GM12878 (cell line): ENCODE measurements at regions of chr3 and their contacts with region 1.

Region 1: GRCh38 chr3:179015551-179016020 is 56.0 kb downstream of the ZMAT3 start:
- DNase-seq: peak; percentile 93
- ATAC-seq: peak; percentile 75
- H3K4me3 ChIP-seq: no peak overlapping the region
- H3K27ac ChIP-seq: peak overlapping the region; percentile 68
- H3K4me1 ChIP-seq: peaks cover 42% of the 10 kb centered on the region
- H3K27me3 ChIP-seq: no peaks in the 10 kb centered on the region
- CTCF ChIP-seq: peak; percentile 66 to 88 (median 83)
- EP300 ChIP-seq: no peak
- POLR2A ChIP-seq: no peak
- RAD21 ChIP-seq: peak; percentile 92

Region 2: DNA sequence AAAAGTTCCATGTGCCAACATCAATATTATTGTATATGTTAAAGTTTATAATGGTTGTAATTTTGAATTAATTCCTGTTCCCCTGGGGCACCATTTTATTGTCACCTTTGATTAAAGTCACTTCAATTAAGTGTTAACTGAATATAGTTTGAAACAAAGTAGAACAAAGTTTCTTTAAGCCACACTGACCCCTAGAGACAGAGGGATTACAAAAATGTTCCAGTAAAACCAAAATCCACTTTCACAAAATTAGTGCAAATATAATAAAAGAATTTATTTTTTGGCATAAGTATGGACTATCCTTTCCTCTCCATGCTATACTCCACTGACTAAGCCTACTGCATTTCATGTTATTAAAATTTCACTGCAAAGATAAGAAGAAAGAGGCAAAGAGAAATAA is 67.8 kb before region 1 on chr3:
- CTCF ChIA-PET with region 1: no interaction called
- POLR2A ChIA-PET with region 1: no interaction called
- RAD21 ChIA-PET with region 1: no interaction called
- SMC1A ChIA-PET with region 1: no interaction called
- in situ Hi-C with region 1: no loop called
- intact Hi-C with region 1: no loop called
- DNase-seq: no peak
- ATAC-seq: no peak
- H3K4me3 ChIP-seq: no peak overlapping the region
- H3K27ac ChIP-seq: no peak overlapping the region
- H3K4me1 ChIP-seq: no peaks in the 10 kb centered on the region
- H3K27me3 ChIP-seq: no peaks in the 10 kb centered on the region
- CTCF ChIP-seq: no peak; a peak in 1 of 6 replicates
- EP300 ChIP-seq: no peak
- POLR2A ChIP-seq: no peak
- RAD21 ChIP-seq: peak; percentile 44; the same call in 1 of the 2 replicates

Region 3: GRCh38 chr3:178966299-178967176 is 49.0 kb before region 1 on chr3:
- CTCF ChIA-PET with region 1: interaction called, 14 read pairs
- POLR2A ChIA-PET with region 1: no interaction called
- RAD21 ChIA-PET with region 1: no interaction called
- SMC1A ChIA-PET with region 1: interaction called, 21 read pairs
- in situ Hi-C with region 1: no loop called
- intact Hi-C with region 1: no loop called
- DNase-seq: peak; percentile 32
- ATAC-seq: peak; percentile 26
- H3K4me3 ChIP-seq: peak overlapping the region; percentile 39; the same call in 1 of the 2 replicates
- H3K27ac ChIP-seq: peak overlapping the region; percentile 73
- H3K4me1 ChIP-seq: peaks cover 32% of the 10 kb centered on the region
- H3K27me3 ChIP-seq: no peaks in the 10 kb centered on the region
- CTCF ChIP-seq: peak; percentile 41 to 61 (median 45); a peak in 5 of 6 replicates
- EP300 ChIP-seq: no peak; a peak in 1 of 4 replicates
- POLR2A ChIP-seq: no peak
- RAD21 ChIP-seq: peak; percentile 91

Region 4: GRCh38 chr3:178986456-178986855 is 29.1 kb before region 1 on chr3:
- CTCF ChIA-PET with region 1: no interaction called
- POLR2A ChIA-PET with region 1: no interaction called
- RAD21 ChIA-PET with region 1: no interaction called
- SMC1A ChIA-PET with region 1: no interaction called
- in situ Hi-C with region 1: no loop called
- intact Hi-C with region 1: no loop called
- DNase-seq: no peak
- ATAC-seq: no peak
- H3K4me3 ChIP-seq: no peak overlapping the region
- H3K27ac ChIP-seq: no peak overlapping the region
- H3K4me1 ChIP-seq: no peaks in the 10 kb centered on the region; the same call in 1 of the 2 replicates
- H3K27me3 ChIP-seq: no peaks in the 10 kb centered on the region
- CTCF ChIP-seq: no peak
- EP300 ChIP-seq: no peak
- POLR2A ChIP-seq: no peak
- RAD21 ChIP-seq: no peak

Region 5: GRCh38 chr3:179063945-179064560 is 48.5 kb after region 1 on chr3:
- CTCF ChIA-PET with region 1: interaction called, 120 read pairs
- POLR2A ChIA-PET with region 1: interaction called, 58 read pairs
- RAD21 ChIA-PET with region 1: interaction called, 95 read pairs
- SMC1A ChIA-PET with region 1: interaction called, 105 read pairs
- in situ Hi-C with region 1: no loop called
- intact Hi-C with region 1: loop called (anchors 1 kb)
- DNase-seq: no peak
- ATAC-seq: no peak
- H3K4me3 ChIP-seq: peak overlapping the region; percentile 28; the same call in 1 of the 2 replicates
- H3K27ac ChIP-seq: no peak overlapping the region
- H3K4me1 ChIP-seq: no peaks in the 10 kb centered on the region; the same call in 1 of the 2 replicates
- H3K27me3 ChIP-seq: no peaks in the 10 kb centered on the region
- CTCF ChIP-seq: no peak
- EP300 ChIP-seq: no peak
- POLR2A ChIP-seq: no peak
- RAD21 ChIP-seq: no peak

Region 6: GRCh38 chr3:179098388-179099077 is 82.9 kb after region 1 on chr3:
- CTCF ChIA-PET with region 1: interaction called, 27 read pairs
- POLR2A ChIA-PET with region 1: no interaction called
- RAD21 ChIA-PET with region 1: interaction called, 3 read pairs
- SMC1A ChIA-PET with region 1: interaction called, 20 read pairs
- in situ Hi-C with region 1: no loop called
- intact Hi-C with region 1: no loop called
- DNase-seq: no peak
- ATAC-seq: peak; percentile 21; the same call in 2 of the 3 replicates
- H3K4me3 ChIP-seq: no peak overlapping the region
- H3K27ac ChIP-seq: no peak overlapping the region
- H3K4me1 ChIP-seq: no peaks in the 10 kb centered on the region
- H3K27me3 ChIP-seq: no peaks in the 10 kb centered on the region
- CTCF ChIP-seq: no peak
- EP300 ChIP-seq: no peak
- POLR2A ChIP-seq: no peak
- RAD21 ChIP-seq: peak; percentile 6; the same call in 1 of the 2 replicates

Region 7: GRCh38 chr3:179260949-179261765 is 245.6 kb after region 1 on chr3:
- CTCF ChIA-PET with region 1: no interaction called
- POLR2A ChIA-PET with region 1: no interaction called
- RAD21 ChIA-PET with region 1: no interaction called
- SMC1A ChIA-PET with region 1: interaction called, 6 read pairs
- in situ Hi-C with region 1: no loop called
- intact Hi-C with region 1: loop called (anchors 5 kb)
- DNase-seq: no peak
- ATAC-seq: peak; percentile 96
- H3K4me3 ChIP-seq: peak overlapping the region; percentile 88
- H3K27ac ChIP-seq: peak overlapping the region; percentile 18
- H3K4me1 ChIP-seq: peaks cover 4% of the 10 kb centered on the region; the same call in 1 of the 2 replicates
- H3K27me3 ChIP-seq: no peaks in the 10 kb centered on the region
- CTCF ChIP-seq: no peak
- EP300 ChIP-seq: no peak
- POLR2A ChIP-seq: peak; percentile 84
- RAD21 ChIP-seq: no peak

Region 8: GRCh38 chr3:179562591-179563270 is 547.1 kb after region 1 on chr3 and contains the start of gene ACTL6A:
- CTCF ChIA-PET with region 1: interaction called, 8 read pairs
- POLR2A ChIA-PET with region 1: no interaction called
- RAD21 ChIA-PET with region 1: interaction called, 7 read pairs
- SMC1A ChIA-PET with region 1: interaction called, 5 read pairs
- in situ Hi-C with region 1: loop called (anchors 10 kb)
- intact Hi-C with region 1: loop called (anchors 5 kb)
- DNase-seq: peak; percentile 98
- ATAC-seq: peak; percentile 96
- H3K4me3 ChIP-seq: peak within 1 kb of the TSS; percentile 96
- H3K27ac ChIP-seq: peak within 1 kb of the TSS; percentile 75
- H3K4me1 ChIP-seq: no peaks in the 10 kb centered on the region
- H3K27me3 ChIP-seq: no peaks in the 10 kb centered on the region; a peak in 1 of 4 replicates
- CTCF ChIP-seq: no peak
- EP300 ChIP-seq: 0 out of 4 replicates have a peak, but pooled peaks of 1 of the 2 experiments have one; percentile 9
- POLR2A ChIP-seq: peak; percentile 92
- RAD21 ChIP-seq: no peak
- polyA plus RNA-seq, gene ACTL6A: 102 to 123 TPM